GM12878 (cell line): ENCODE measurements at regions of chr10 and their contacts with region 1.

Region 1: DNA sequence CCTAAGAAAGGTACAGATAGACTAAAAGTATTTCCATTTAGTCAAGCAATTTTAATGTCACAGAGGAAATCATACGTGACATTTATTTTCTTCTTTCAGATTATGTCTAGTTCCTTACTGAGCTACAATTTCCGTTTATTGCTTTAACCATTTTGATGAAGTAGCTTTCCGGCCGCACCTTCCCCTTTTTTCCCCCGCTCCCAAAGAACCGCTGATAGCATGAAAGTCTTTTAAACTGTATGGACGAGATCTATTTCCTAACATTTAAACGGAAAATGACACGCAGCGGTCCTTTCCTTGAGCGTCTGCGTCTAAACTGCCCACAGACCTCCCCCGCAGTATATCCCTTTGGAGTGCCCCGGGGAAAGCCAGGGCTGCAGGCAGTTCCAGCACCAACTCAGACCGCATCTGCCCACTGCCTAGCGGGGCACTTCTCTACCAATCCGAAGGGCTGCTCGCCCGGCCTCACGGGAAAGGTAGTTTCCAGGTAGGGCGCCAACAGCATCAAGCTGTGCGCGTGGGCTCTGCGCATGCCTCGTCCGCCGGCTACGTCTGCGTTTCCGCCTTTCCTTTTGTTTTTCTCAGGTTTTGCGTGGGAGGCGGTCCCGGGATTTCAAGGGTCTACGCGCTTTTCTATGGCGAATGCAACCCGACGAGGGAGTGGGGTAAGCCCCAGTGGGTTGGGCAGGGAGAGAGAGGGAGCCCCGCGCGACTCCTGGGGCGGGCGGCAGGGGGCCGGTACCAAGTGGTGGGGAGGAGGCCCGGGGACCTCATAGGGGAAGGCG is at the start of gene ZNF33A:
- DNase-seq: peak; percentile 85
- ATAC-seq: peak; percentile 95
- H3K4me3 ChIP-seq: peak within 1 kb of the TSS; percentile 83
- H3K27ac ChIP-seq: peak within 1 kb of the TSS; percentile 88
- H3K4me1 ChIP-seq: no peaks in the 10 kb centered on the region
- H3K27me3 ChIP-seq: no peaks in the 10 kb centered on the region
- CTCF ChIP-seq: 0 out of 6 replicates have a peak, but pooled peaks of 1 of the 3 experiments have one; percentile 10
- EP300 ChIP-seq: peak in 1 of 2 experiments; percentile 39; a peak in 1 of 4 replicates
- POLR2A ChIP-seq: no peak
- RAD21 ChIP-seq: no peak
- polyA plus RNA-seq, gene ZNF33A: 9.8 to 12.1 TPM

Region 2: GRCh38 chr10:38025283-38025682 is 15.0 kb after region 1 on chr10:
- CTCF ChIA-PET with region 1: interaction called, 4 read pairs
- POLR2A ChIA-PET with region 1: interaction called, 3 read pairs
- RAD21 ChIA-PET with region 1: interaction called, 3 read pairs
- SMC1A ChIA-PET with region 1: interaction called, 12 read pairs
- in situ Hi-C with region 1: no loop called
- intact Hi-C with region 1: no loop called
- DNase-seq: no peak
- ATAC-seq: peak; percentile 97
- H3K4me3 ChIP-seq: no peak overlapping the region
- H3K27ac ChIP-seq: peak overlapping the region; percentile 42
- H3K4me1 ChIP-seq: peaks cover 23% of the 10 kb centered on the region
- H3K27me3 ChIP-seq: no peaks in the 10 kb centered on the region
- CTCF ChIP-seq: no peak
- EP300 ChIP-seq: no peak
- POLR2A ChIP-seq: peak; percentile 30; the same call in 1 of the 2 replicates
- RAD21 ChIP-seq: no peak

Region 3: GRCh38 chr10:38038107-38038931 is 28.0 kb after region 1 on chr10:
- CTCF ChIA-PET with region 1: no interaction called
- POLR2A ChIA-PET with region 1: interaction called, 3 read pairs
- RAD21 ChIA-PET with region 1: no interaction called
- SMC1A ChIA-PET with region 1: interaction called, 3 read pairs
- in situ Hi-C with region 1: no loop called
- intact Hi-C with region 1: loop called (anchors 2 kb)
- DNase-seq: peak; percentile 57
- ATAC-seq: peak; percentile 97
- H3K4me3 ChIP-seq: peak overlapping the region; percentile 50
- H3K27ac ChIP-seq: peak overlapping the region; percentile 83
- H3K4me1 ChIP-seq: peaks cover 8% of the 10 kb centered on the region
- H3K27me3 ChIP-seq: no peaks in the 10 kb centered on the region
- CTCF ChIP-seq: no peak
- EP300 ChIP-seq: no peak
- POLR2A ChIP-seq: no peak
- RAD21 ChIP-seq: no peak

Region 4: DNA sequence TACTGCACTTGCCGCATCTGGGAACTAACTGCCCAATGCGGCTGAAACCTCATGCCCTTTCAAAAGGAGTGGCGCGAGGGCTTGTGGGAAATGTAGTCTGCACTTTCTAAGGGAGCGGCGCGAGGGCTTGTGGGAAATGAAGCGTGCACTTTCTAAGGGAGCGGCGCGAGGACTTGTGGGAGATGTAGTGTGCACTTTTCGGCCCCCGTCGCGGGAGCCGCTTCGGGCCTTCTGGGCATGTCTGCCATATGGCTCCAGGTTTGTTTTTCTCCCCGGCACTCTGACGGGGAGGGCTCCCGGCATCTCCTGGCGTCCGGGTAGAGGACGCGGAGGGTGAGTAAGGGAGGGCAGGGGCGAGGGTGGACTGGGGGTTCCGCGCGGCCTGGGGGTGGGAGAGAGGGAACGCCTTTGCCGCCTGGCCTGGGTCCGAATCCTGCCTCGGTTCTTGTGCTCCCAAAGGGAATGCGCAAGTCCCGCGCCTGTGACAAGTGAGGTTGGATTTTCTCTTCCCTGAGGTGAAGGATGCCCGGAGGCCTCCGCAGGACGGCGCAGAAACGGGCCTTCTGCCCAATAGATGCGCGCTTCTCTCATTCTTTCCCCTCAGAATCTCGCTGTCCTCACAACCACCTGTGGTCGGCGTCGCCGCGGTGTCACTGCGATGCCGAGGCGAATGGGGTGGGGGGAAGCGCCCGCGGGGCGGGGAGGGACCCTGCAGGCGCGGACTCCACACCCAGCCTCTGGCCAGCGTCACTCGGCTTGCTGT is 84.0 kb after region 1 on chr10 and contains the start of gene ZNF37A:
- CTCF ChIA-PET with region 1: interaction called, 8 read pairs
- POLR2A ChIA-PET with region 1: no interaction called
- RAD21 ChIA-PET with region 1: interaction called, 9 read pairs
- SMC1A ChIA-PET with region 1: interaction called, 6 read pairs
- in situ Hi-C with region 1: no loop called
- intact Hi-C with region 1: loop called (anchors 1 kb)
- DNase-seq: peak; percentile 83
- ATAC-seq: peak; percentile 99
- H3K4me3 ChIP-seq: peak within 1 kb of the TSS; percentile 79
- H3K27ac ChIP-seq: peak within 1 kb of the TSS; percentile 77
- H3K4me1 ChIP-seq: peaks cover 9% of the 10 kb centered on the region; the same call in 1 of the 2 replicates
- H3K27me3 ChIP-seq: no peaks in the 10 kb centered on the region
- CTCF ChIP-seq: no peak
- EP300 ChIP-seq: no peak
- POLR2A ChIP-seq: peak; percentile 69
- RAD21 ChIP-seq: no peak
- polyA plus RNA-seq, gene ZNF37A: 3.3 to 5.1 TPM